ENCODE measurements at regions of chr6 and their contacts with region 1.

Region 1: GRCh38 chr6:89080542-89081422 is at the start of gene PNRC1:
- DNase-seq: peak; percentile 100
- ATAC-seq: peak; percentile 80 to 83 (median 82)
- H3K4me3 ChIP-seq: peak within 1 kb of the TSS; percentile 98
- H3K27ac ChIP-seq: peak within 1 kb of the TSS; percentile 100
- H3K4me1 ChIP-seq: peaks cover 28% of the 10 kb centered on the region
- H3K27me3 ChIP-seq: no peaks in the 10 kb centered on the region
- CTCF ChIP-seq: no peak
- total RNA-seq, gene PNRC1: 236 to 552 (median 436) TPM

Region 2: GRCh38 chr6:89035252-89036106 is 45.3 kb before region 1 on chr6:
- intact Hi-C with region 1: loop called (anchors 1 to 2 kb)
- DNase-seq: peak; percentile 92 to 96
- ATAC-seq: peak; percentile 80 to 87 (median 84)
- H3K4me3 ChIP-seq: peak overlapping the region; percentile 40
- H3K27ac ChIP-seq: peak overlapping the region; percentile 93
- H3K4me1 ChIP-seq: peaks cover 43% of the 10 kb centered on the region
- H3K27me3 ChIP-seq: no peaks in the 10 kb centered on the region
- CTCF ChIP-seq: no peak

Region 3: GRCh38 chr6:89145787-89146646 is 65.2 kb after region 1 on chr6 and contains the start of gene PM20D2:
- intact Hi-C with region 1: loop called in 1 of 2 experiments (anchors 2 kb)
- DNase-seq: peak; percentile 74 to 84
- ATAC-seq: peak; percentile 83 to 88 (median 86)
- H3K4me3 ChIP-seq: peak within 1 kb of the TSS; percentile 95
- H3K27ac ChIP-seq: peak within 1 kb of the TSS; percentile 100
- H3K4me1 ChIP-seq: peaks cover 6% of the 10 kb centered on the region
- H3K27me3 ChIP-seq: no peaks in the 10 kb centered on the region
- CTCF ChIP-seq: no peak
- total RNA-seq, gene PM20D2: 13.1 to 56.2 (median 25.0) TPM

Region 4: GRCh38 chr6:89667872-89668556 is 587.2 kb after region 1 on chr6:
- intact Hi-C with region 1: no loop called
- DNase-seq: no peak
- ATAC-seq: no peak
- H3K4me3 ChIP-seq: no peak overlapping the region
- H3K27ac ChIP-seq: no peak overlapping the region
- H3K4me1 ChIP-seq: peaks cover 14% of the 10 kb centered on the region
- H3K27me3 ChIP-seq: no peaks in the 10 kb centered on the region
- CTCF ChIP-seq: no peak

Measured in psoas muscle (tissue), 8 donors.